Testis (tissue), 5 donors: ENCODE measurements at regions of chr12 and their contacts with region 1.

Region 1: DNA sequence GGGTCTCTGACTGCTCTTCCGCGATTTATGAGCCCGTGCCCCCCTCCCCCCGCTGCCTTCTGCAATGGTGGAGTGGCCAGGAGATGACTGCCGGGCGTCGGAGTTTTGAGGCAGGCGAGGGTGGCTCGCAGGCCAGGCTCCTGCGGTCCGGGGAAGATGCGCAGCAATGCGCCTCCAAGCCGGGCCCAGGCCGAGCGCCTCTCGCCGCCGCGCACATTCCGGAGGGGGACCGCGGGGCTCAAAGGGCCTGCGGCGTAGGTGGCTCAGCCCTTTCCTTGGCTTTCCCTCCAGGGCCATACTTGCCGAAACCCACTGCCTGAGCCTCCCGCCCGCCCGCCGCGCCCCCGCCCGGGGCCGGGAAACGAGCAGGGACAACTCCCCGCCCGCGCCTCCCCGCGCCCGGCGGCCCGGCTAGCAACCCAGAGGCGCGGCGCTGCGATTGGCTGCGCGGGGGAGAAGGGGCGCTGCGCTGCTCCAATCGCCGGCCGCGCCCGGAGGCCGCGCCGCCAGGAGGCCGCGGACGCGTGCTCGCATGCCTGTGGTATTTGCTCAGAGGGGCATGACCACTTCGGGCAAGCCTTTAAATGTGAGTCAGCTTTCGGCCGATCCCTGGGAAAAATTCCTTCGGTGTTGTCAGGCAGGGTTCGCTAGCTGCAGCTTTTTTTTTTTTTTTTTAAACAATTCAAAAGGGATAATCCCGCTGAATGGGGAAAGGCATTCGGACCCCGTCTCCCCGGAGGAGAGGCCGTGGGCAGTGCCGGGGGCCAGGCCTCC is 157.9 kb upstream of the PARP11 start:
- DNase-seq: peak; percentile 86
- H3K4me3 ChIP-seq: peak overlapping the region; percentile 56 to 57
- H3K27ac ChIP-seq: peak overlapping the region; percentile 80 to 86
- H3K4me1 ChIP-seq: no peaks in the 10 kb centered on the region
- H3K27me3 ChIP-seq: no peaks in the 10 kb centered on the region
- CTCF ChIP-seq: peak in 1 of 3 experiments; percentile 28
- POLR2A ChIP-seq: no peak

Region 2: DNA sequence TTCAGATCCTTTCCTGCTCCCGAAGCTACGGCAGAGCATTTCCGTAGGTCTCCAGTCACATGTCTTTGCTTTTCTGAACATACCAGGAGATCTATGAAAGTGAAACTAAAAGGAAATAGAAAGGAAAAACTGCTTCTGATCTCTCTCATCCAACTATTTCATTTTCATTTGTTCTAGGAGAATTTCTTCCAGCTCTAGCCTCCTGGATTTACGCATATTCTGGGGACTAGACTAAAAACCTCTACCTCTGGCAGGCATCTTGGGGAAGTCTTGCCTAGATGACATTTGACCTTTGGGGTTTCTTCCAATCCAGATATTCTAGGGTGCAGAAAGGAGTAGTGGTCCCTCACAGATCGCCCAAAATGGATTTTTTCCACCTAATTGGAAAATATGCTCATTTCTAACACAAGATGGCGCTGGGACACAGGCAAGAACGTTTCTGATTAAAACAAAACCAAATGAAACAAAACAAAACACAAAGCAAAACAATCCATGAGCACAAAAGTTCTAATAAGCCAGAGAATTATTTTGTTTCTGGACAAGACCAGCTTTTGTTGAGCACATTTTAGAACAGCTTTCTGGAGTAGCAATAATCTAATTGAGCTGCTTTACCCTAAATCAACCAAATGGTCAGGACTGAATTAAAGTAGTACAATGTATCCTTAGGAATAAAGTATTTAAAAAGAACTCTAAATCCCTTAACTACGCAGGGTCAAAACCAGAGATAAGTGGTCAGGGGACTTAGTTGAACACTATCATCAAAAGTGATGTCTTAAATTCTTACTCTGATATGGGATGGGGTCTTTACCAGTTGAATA is 145.6 kb before region 1 on chr12:
- intact Hi-C with region 1: loop called (anchors 5 kb)
- DNase-seq: no peak
- H3K4me3 ChIP-seq: no peak overlapping the region
- H3K27ac ChIP-seq: peak overlapping the region; percentile 55 to 79
- H3K4me1 ChIP-seq: no peaks in the 10 kb centered on the region
- H3K27me3 ChIP-seq: no peaks in the 10 kb centered on the region
- CTCF ChIP-seq: peak; percentile 81 to 85 (median 84)
- POLR2A ChIP-seq: no peak

Region 3: DNA sequence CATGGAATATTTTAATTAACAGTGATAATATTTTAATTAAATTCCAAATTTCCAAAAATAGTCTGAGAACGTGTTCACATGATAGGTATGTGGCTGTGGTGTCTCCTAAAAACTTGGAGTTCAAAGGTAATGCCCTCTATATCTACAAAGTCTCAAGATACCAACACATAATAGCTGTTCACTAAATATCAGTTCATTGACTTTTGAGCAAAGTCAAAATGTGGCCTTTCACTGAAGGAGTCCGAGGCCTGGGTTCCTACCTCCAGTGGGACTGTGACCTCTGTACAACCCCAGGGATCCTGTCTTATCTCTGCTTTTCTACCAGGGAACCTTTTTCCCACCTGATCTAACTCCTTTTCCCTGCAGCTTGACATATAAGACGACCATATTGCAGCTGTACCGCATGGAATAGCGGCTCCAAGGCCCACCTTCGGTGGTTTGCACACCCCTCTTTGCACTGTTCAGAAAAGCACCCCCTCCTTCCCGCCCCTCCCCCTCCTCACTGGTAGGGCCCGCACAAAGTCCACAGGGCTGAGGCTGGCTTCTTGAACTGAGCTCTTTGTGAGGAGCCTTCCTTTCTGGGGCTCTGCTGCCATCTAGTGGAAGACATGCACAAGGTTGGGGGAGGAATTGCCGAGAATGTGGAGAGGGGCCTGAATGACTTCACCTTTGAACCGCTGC is 245.5 kb after region 1 on chr12:
- intact Hi-C with region 1: loop called (anchors 10 kb)
- DNase-seq: peak; percentile 89
- H3K4me3 ChIP-seq: no peak overlapping the region
- H3K27ac ChIP-seq: peak overlapping the region in 1 of 2 donors; percentile 55
- H3K4me1 ChIP-seq: peaks cover 41% of the 10 kb centered on the region
- H3K27me3 ChIP-seq: no peaks in the 10 kb centered on the region
- CTCF ChIP-seq: peak; percentile 84 to 85 (median 84)
- POLR2A ChIP-seq: no peak

Region 4: GRCh38 chr12:4451694-4452093 is 420.6 kb after region 1 on chr12:
- intact Hi-C with region 1: no loop called
- DNase-seq: no peak
- H3K4me3 ChIP-seq: no peak overlapping the region
- H3K27ac ChIP-seq: no peak overlapping the region
- H3K4me1 ChIP-seq: no peaks in the 10 kb centered on the region
- H3K27me3 ChIP-seq: no peaks in the 10 kb centered on the region
- CTCF ChIP-seq: no peak
- POLR2A ChIP-seq: no peak